Activated CD4-positive, alpha-beta memory T cell treated with anti-CD3 and anti-CD28 coated beads for 36 hours (primary cell): ENCODE measurements at regions of chr6 and their contacts with region 1.

Region 1: GRCh38 chr6:156857573-156857972 is 80.4 kb downstream of the ARID1B start:
- DNase-seq: peak; percentile 51
- H3K4me3 Mint-ChIP-seq: no peak overlapping the region
- H3K27ac Mint-ChIP-seq: peak overlapping the region; percentile 90
- H3K4me1 Mint-ChIP-seq: peaks cover 78% of the 10 kb centered on the region
- H3K27me3 Mint-ChIP-seq: no peaks in the 10 kb centered on the region

Region 2: GRCh38 chr6:156791320-156791850 is 66.2 kb before region 1 on chr6:
- CTCF ChIA-PET with region 1: no interaction called
- POLR2A ChIA-PET with region 1: no interaction called
- intact Hi-C with region 1: loop called (anchors 2 kb)
- DNase-seq: no peak
- H3K4me3 Mint-ChIP-seq: peak overlapping the region; percentile 26
- H3K27ac Mint-ChIP-seq: peak overlapping the region; percentile 36
- H3K4me1 Mint-ChIP-seq: peaks cover 88% of the 10 kb centered on the region
- H3K27me3 Mint-ChIP-seq: no peaks in the 10 kb centered on the region

Region 3: GRCh38 chr6:156933201-156934068 is 75.9 kb after region 1 on chr6:
- CTCF ChIA-PET with region 1: no interaction called
- POLR2A ChIA-PET with region 1: no interaction called
- intact Hi-C with region 1: loop called (anchors 1 kb)
- DNase-seq: no peak
- H3K4me3 Mint-ChIP-seq: no peak overlapping the region
- H3K27ac Mint-ChIP-seq: no peak overlapping the region
- H3K4me1 Mint-ChIP-seq: peaks cover 60% of the 10 kb centered on the region
- H3K27me3 Mint-ChIP-seq: no peaks in the 10 kb centered on the region

Region 4: GRCh38 chr6:157021344-157021992 is 163.9 kb after region 1 on chr6:
- CTCF ChIA-PET with region 1: interaction called, 4 read pairs
- POLR2A ChIA-PET with region 1: no interaction called
- intact Hi-C with region 1: loop called (anchors 1 kb)
- DNase-seq: peak; percentile 93
- H3K4me3 Mint-ChIP-seq: peak overlapping the region; percentile 87
- H3K27ac Mint-ChIP-seq: peak overlapping the region; percentile 99
- H3K4me1 Mint-ChIP-seq: peaks cover 47% of the 10 kb centered on the region
- H3K27me3 Mint-ChIP-seq: no peaks in the 10 kb centered on the region

Region 5: GRCh38 chr6:157240059-157240959 is 382.7 kb after region 1 on chr6:
- CTCF ChIA-PET with region 1: no interaction called
- POLR2A ChIA-PET with region 1: no interaction called
- intact Hi-C with region 1: no loop called
- DNase-seq: peak; percentile 22
- H3K4me3 Mint-ChIP-seq: no peak overlapping the region
- H3K27ac Mint-ChIP-seq: no peak overlapping the region
- H3K4me1 Mint-ChIP-seq: peaks cover 8% of the 10 kb centered on the region
- H3K27me3 Mint-ChIP-seq: peaks cover 10% of the 10 kb centered on the region